CD8-positive, alpha-beta T cell (primary cell): ENCODE measurements at regions of chr19 and their contacts with region 1.

Region 1: DNA sequence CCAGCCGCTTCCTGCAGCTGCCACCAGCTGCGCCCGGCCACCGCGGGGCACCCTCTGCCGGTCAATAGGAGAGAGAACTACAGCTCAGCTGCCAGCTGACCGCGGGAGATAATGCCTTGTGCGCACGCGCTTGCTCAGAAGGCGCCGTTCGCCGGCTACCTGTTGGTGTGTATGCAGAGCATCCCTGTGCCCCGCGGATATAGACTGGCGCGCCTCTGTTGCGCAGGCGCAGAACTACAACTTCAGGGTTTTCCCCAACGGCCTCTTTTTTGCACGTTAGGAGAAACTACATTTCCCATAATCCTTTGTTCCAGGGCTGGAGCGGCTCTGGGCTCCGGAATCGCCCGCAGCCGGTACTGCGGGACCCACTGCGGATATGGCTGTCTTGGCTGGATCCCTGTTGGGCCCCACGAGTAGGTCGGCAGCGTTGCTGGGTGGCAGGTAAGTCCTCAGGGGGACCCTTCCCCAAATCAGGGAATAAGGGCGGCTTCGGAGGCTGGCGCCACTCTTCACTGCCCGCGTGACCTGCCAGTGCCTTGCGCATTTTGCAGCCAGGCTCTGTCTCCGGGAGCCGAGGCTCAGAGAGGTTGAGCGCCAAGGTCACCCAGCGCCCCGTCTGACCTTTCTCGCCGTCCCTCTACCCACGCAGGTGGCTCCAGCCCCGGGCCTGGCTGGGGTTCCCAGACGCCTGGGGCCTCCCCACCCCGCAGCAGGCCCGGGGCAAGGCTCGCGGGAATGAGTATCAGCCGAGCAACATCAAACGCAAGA is at the start of gene MRPL34:
- DNase-seq: peak; percentile 85 to 99 (median 93)
- ATAC-seq: peak; percentile 53
- H3K4me3 ChIP-seq: peak within 1 kb of the TSS; percentile 77 to 79
- H3K4me3 Mint-ChIP-seq: peak within 1 kb of the TSS; percentile 89
- H3K27ac ChIP-seq: peak within 1 kb of the TSS; percentile 55 to 74
- H3K27ac Mint-ChIP-seq: peak within 1 kb of the TSS; percentile 91
- H3K4me1 ChIP-seq: peaks cover 44% of the 10 kb centered on the region
- H3K4me1 Mint-ChIP-seq: peaks cover 48% of the 10 kb centered on the region
- H3K27me3 ChIP-seq: no peaks in the 10 kb centered on the region
- H3K27me3 Mint-ChIP-seq: no peaks in the 10 kb centered on the region
- CTCF ChIP-seq: peak; percentile 57
- total RNA-seq, gene MRPL34: 29.5 to 33.8 TPM

Region 2: GRCh38 chr19:17125715-17126677 is 179.7 kb before region 1 on chr19:
- CTCF ChIA-PET with region 1: interaction called, 3 read pairs
- POLR2A ChIA-PET with region 1: no interaction called
- intact Hi-C with region 1: loop called in 1 of 2 experiments (anchors 1 kb)
- DNase-seq: peak; percentile 60 to 95 (median 80)
- ATAC-seq: peak; percentile 81
- H3K4me3 ChIP-seq: peak overlapping the region; percentile 40 to 41
- H3K4me3 Mint-ChIP-seq: peak overlapping the region; percentile 83
- H3K27ac ChIP-seq: peak overlapping the region; percentile 85 to 89
- H3K27ac Mint-ChIP-seq: peak overlapping the region; percentile 99
- H3K4me1 ChIP-seq: peaks cover 52% of the 10 kb centered on the region
- H3K4me1 Mint-ChIP-seq: peaks cover 71% of the 10 kb centered on the region
- H3K27me3 ChIP-seq: no peaks in the 10 kb centered on the region
- H3K27me3 Mint-ChIP-seq: no peaks in the 10 kb centered on the region
- CTCF ChIP-seq: no peak

Region 3: GRCh38 chr19:17226002-17226933 is 79.4 kb before region 1 on chr19 and contains the start of gene OCEL1:
- CTCF ChIA-PET with region 1: no interaction called
- POLR2A ChIA-PET with region 1: interaction called, 3 read pairs
- intact Hi-C with region 1: loop called in 1 of 2 experiments (anchors 2 kb)
- DNase-seq: peak; percentile 92 to 99 (median 96)
- ATAC-seq: peak; percentile 91
- H3K4me3 ChIP-seq: peak within 1 kb of the TSS; percentile 71 to 100
- H3K4me3 Mint-ChIP-seq: peak within 1 kb of the TSS; percentile 91
- H3K27ac ChIP-seq: peak within 1 kb of the TSS; percentile 89 to 96
- H3K27ac Mint-ChIP-seq: peak within 1 kb of the TSS; percentile 95
- H3K4me1 ChIP-seq: peaks cover 13% of the 10 kb centered on the region
- H3K4me1 Mint-ChIP-seq: peaks cover 8% of the 10 kb centered on the region
- H3K27me3 ChIP-seq: no peaks in the 10 kb centered on the region
- H3K27me3 Mint-ChIP-seq: no peaks in the 10 kb centered on the region
- CTCF ChIP-seq: no peak
- total RNA-seq, gene OCEL1: 20.9 to 24.9 TPM

Region 4: GRCh38 chr19:17282488-17283255 is 23.0 kb before region 1 on chr19:
- CTCF ChIA-PET with region 1: interaction called, 21 read pairs
- POLR2A ChIA-PET with region 1: no interaction called
- intact Hi-C with region 1: no loop called
- DNase-seq: peak; percentile 62 to 87 (median 78)
- ATAC-seq: peak; percentile 95
- H3K4me3 ChIP-seq: peak overlapping the region; percentile 47 to 82
- H3K4me3 Mint-ChIP-seq: peak overlapping the region; percentile 80
- H3K27ac ChIP-seq: no peak overlapping the region
- H3K27ac Mint-ChIP-seq: no peak overlapping the region
- H3K4me1 ChIP-seq: peaks cover 4% of the 10 kb centered on the region
- H3K4me1 Mint-ChIP-seq: peaks cover 2% of the 10 kb centered on the region
- H3K27me3 ChIP-seq: peaks cover 0 to 7% of the 10 kb centered on the region in 2 experiments
- H3K27me3 Mint-ChIP-seq: no peaks in the 10 kb centered on the region
- CTCF ChIP-seq: peak; percentile 97

Region 5: DNA sequence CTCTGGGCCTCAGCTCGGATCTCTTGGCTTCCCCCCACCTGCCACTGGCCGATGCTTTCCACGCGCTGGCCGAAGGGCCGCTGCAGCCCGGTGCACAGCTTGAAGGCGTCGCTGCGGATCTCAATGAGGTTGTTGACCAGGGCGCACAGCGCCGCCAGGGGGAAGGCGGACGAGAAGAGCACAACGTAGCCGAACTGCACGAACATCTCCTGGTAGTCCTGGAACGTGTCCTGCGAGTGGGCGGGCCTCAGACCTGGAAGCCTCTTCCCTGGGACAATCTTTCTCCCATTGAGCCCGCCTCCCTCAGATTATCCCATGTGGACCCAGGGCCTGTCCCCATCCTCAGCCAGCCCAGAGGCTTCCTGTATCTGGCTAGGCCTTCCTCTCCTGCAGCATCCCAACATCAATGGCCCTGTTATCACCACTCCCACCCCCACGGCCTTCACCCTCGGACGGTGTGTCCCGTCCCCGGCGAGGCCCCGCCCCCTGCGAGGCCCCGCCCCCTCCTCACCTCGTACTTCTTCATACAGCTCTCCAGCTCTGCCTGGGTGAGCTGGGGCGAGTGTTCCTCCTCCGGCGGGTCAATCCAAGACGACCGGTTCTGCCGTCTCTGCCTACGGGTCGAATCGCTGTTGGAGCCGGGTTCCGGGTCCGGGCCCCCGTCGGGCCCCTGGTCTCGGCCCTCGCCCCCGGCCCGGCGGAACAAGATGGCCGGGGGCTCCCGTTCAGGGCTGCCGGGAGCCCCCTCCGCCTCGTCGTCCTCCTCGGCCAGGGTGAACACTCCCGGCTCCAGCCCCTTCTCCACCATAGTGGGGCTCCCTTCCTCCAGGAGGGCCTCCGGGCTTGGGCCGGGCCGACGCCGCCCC is 22.2 kb after region 1 on chr19:
- CTCF ChIA-PET with region 1: interaction called, 7 read pairs
- POLR2A ChIA-PET with region 1: interaction called, 29 read pairs
- intact Hi-C with region 1: loop called (anchors 1 kb)
- DNase-seq: peak in 8 of 9 experiments; percentile 37 to 75 (median 55)
- ATAC-seq: peak; percentile 74
- H3K4me3 ChIP-seq: peak overlapping the region; percentile 59 to 73
- H3K4me3 Mint-ChIP-seq: peak overlapping the region; percentile 81
- H3K27ac ChIP-seq: peak overlapping the region; percentile 27 to 53
- H3K27ac Mint-ChIP-seq: peak overlapping the region; percentile 60
- H3K4me1 ChIP-seq: peaks cover 12% of the 10 kb centered on the region
- H3K4me1 Mint-ChIP-seq: peaks cover 22% of the 10 kb centered on the region
- H3K27me3 ChIP-seq: no peaks in the 10 kb centered on the region
- H3K27me3 Mint-ChIP-seq: no peaks in the 10 kb centered on the region
- CTCF ChIP-seq: no peak

Region 6: GRCh38 chr19:17419621-17420466 is 114.1 kb after region 1 on chr19 and contains the start of gene MVB12A:
- CTCF ChIA-PET with region 1: interaction called, 3 read pairs
- POLR2A ChIA-PET with region 1: interaction called, 5 read pairs
- intact Hi-C with region 1: loop called (anchors 1 kb)
- DNase-seq: peak; percentile 90 to 100 (median 96)
- ATAC-seq: peak; percentile 98
- H3K4me3 ChIP-seq: peak within 1 kb of the TSS; percentile 69 to 76
- H3K4me3 Mint-ChIP-seq: peak within 1 kb of the TSS; percentile 89
- H3K27ac ChIP-seq: peak within 1 kb of the TSS; percentile 47 to 51
- H3K27ac Mint-ChIP-seq: peak within 1 kb of the TSS; percentile 80
- H3K4me1 ChIP-seq: peaks cover 19% of the 10 kb centered on the region
- H3K4me1 Mint-ChIP-seq: peaks cover 18% of the 10 kb centered on the region
- H3K27me3 ChIP-seq: no peaks in the 10 kb centered on the region
- H3K27me3 Mint-ChIP-seq: no peaks in the 10 kb centered on the region
- CTCF ChIP-seq: no peak
- total RNA-seq, gene MVB12A: 9.1 to 10.4 TPM

Region 7: GRCh38 chr19:17448131-17448967 is 142.6 kb after region 1 on chr19 and contains the start of gene TMEM221:
- CTCF ChIA-PET with region 1: no interaction called
- POLR2A ChIA-PET with region 1: no interaction called
- intact Hi-C with region 1: no loop called
- DNase-seq: peak; percentile 16 to 76 (median 59)
- ATAC-seq: peak; percentile 81
- H3K4me3 ChIP-seq: peak within 1 kb of the TSS in 1 of 2 experiments; percentile 15
- H3K4me3 Mint-ChIP-seq: peak within 1 kb of the TSS; percentile 53
- H3K27ac ChIP-seq: no peak within 1 kb of the TSS
- H3K27ac Mint-ChIP-seq: no peak within 1 kb of the TSS
- H3K4me1 ChIP-seq: no peaks in the 10 kb centered on the region
- H3K4me1 Mint-ChIP-seq: peaks cover 11% of the 10 kb centered on the region
- H3K27me3 ChIP-seq: peaks cover 3 to 20% of the 10 kb centered on the region in 2 experiments
- H3K27me3 Mint-ChIP-seq: peaks cover 17% of the 10 kb centered on the region
- CTCF ChIP-seq: peak; percentile 61
- total RNA-seq, gene TMEM221: not detected

Region 8: DNA sequence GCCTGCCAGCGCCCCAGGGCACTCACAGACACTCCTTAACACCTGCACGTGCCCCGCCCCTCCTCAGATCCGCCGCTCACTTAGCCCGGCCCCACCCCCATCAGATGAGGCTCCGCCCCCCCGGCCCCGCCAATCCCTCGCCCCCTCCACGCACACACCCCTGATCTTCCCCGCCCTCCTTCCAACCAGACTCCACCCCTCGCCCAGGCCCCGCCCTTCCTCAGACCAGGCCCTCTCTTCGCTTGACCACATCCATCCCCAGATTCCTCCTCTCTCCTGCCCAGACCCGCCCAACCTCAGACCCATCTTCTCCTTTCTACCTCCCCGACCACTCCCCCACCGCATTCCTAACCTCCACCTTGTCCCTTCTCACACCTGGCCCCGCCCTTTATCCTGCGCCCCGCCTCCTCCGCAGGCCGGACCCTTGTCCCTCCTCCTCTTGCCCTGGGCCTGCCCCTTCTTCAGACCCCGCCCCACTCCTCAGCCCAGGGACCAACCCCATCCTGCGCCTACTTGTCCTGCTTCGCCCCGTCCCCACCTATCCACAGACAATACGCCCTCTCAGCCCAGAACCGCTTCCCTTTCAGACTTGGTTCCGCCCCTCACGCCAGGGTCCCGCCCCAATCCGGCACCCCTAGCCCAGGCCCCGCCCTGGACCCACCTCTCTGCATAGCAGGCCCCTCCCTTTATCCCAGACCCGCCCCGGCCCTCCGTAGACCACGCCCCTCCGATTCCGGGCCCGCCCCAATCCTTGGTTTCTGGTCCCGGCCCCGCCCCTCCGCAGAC is 1330.7 kb after region 1 on chr19:
- CTCF ChIA-PET with region 1: no interaction called
- POLR2A ChIA-PET with region 1: no interaction called
- intact Hi-C with region 1: no loop called
- DNase-seq: peak; percentile 97 to 100 (median 99)
- ATAC-seq: peak; percentile 87
- H3K4me3 ChIP-seq: peak overlapping the region; percentile 64 to 79
- H3K4me3 Mint-ChIP-seq: peak overlapping the region; percentile 89
- H3K27ac ChIP-seq: peak overlapping the region; percentile 14 to 78
- H3K27ac Mint-ChIP-seq: peak overlapping the region; percentile 82
- H3K4me1 ChIP-seq: peaks cover 22% of the 10 kb centered on the region
- H3K4me1 Mint-ChIP-seq: peaks cover 36% of the 10 kb centered on the region
- H3K27me3 ChIP-seq: no peaks in the 10 kb centered on the region
- H3K27me3 Mint-ChIP-seq: peaks cover 6% of the 10 kb centered on the region
- CTCF ChIP-seq: no peak